Pancreas (tissue), 10 donors: ENCODE measurements at regions of chr9 and their contacts with region 1.

Region 1: GRCh38 chr9:88791105-88791805 is 200.0 kb upstream of the S1PR3 start:
- DNase-seq: no peak
- ATAC-seq: peak in 3 of 4 donors; percentile 24 to 63 (median 40)
- H3K4me3 ChIP-seq: no peak overlapping the region
- H3K27ac ChIP-seq: no peak overlapping the region
- H3K4me1 ChIP-seq: no peaks in the 10 kb centered on the region
- H3K27me3 ChIP-seq: no peaks in the 10 kb centered on the region
- CTCF ChIP-seq: no peak

Region 2: GRCh38 chr9:88852794-88853193 is 61.5 kb after region 1 on chr9:
- intact Hi-C with region 1: loop called in 1 of 3 experiments (anchors 10 kb)
- DNase-seq: no peak
- ATAC-seq: peak in 2 of 4 donors; percentile 18 to 25
- H3K4me3 ChIP-seq: no peak overlapping the region
- H3K27ac ChIP-seq: no peak overlapping the region
- H3K4me1 ChIP-seq: no peaks in the 10 kb centered on the region
- H3K27me3 ChIP-seq: no peaks in the 10 kb centered on the region
- CTCF ChIP-seq: no peak